ENCODE measurements at regions of chr7 and their contacts with region 1.

Region 1: DNA sequence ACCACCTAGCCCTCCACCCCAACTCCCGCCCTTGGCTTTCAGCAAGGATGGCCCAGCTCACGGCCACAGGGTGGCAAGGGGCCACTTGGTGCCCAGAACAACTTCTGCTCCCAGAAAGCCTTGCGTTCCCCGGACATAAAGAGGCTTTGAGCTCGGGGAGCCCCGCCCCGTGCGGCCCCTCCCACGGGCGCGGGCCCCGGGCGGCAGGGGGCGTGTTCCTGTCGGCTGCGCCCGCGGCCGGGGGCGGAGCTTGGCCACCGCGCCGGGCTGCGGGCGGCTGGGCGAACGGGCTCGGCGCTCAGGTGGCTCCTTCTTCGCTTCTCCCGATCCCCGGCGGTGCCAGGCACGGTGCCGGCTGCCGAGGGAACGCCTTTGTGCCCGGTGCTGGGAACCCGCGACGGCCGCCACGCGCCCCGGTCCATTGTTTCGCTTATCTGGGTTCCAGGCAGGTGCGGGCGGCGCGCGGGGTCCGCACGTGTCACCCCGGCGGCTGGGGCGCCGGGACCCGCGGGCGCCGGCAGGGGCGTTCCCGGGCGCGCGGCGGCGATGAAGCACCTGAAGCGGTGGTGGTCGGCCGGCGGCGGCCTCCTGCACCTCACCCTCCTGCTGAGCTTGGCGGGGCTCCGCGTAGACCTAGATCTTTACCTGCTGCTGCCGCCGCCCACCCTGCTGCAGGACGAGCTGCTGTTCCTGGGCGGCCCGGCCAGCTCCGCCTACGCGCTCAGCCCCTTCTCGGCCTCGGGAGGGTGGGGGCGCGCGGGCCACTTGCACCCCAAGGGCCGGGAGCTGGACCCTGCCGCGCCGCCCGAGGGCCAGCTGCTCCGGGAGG is at the start of gene NFE2L3:
- DNase-seq: peak; percentile 64 to 80
- ATAC-seq: peak; percentile 82 to 89
- H3K4me3 ChIP-seq: peak within 1 kb of the TSS; percentile 91
- H3K27ac ChIP-seq: peak within 1 kb of the TSS; percentile 78 to 94
- H3K4me1 ChIP-seq: peaks cover 28% of the 10 kb centered on the region; the same call in 2 of the 3 replicates
- CTCF ChIP-seq: no peak
- EP300 ChIP-seq: no peak
- POLR2A ChIP-seq: peak; percentile 63
- RAD21 ChIP-seq: no peak
- polyA plus RNA-seq, gene NFE2L3: 9.6 and 11.4 TPM in 2 replicates

Region 2: GRCh38 chr7:26167301-26167934 is 15.3 kb after region 1 on chr7:
- CTCF ChIA-PET with region 1: interaction called, 14 read pairs
- POLR2A ChIA-PET with region 1: interaction called, 3 read pairs
- DNase-seq: no peak
- ATAC-seq: no peak
- H3K4me3 ChIP-seq: no peak overlapping the region
- H3K27ac ChIP-seq: no peak overlapping the region
- H3K4me1 ChIP-seq: no peaks in the 10 kb centered on the region
- CTCF ChIP-seq: no peak
- EP300 ChIP-seq: no peak
- POLR2A ChIP-seq: no peak
- RAD21 ChIP-seq: no peak

Region 3: DNA sequence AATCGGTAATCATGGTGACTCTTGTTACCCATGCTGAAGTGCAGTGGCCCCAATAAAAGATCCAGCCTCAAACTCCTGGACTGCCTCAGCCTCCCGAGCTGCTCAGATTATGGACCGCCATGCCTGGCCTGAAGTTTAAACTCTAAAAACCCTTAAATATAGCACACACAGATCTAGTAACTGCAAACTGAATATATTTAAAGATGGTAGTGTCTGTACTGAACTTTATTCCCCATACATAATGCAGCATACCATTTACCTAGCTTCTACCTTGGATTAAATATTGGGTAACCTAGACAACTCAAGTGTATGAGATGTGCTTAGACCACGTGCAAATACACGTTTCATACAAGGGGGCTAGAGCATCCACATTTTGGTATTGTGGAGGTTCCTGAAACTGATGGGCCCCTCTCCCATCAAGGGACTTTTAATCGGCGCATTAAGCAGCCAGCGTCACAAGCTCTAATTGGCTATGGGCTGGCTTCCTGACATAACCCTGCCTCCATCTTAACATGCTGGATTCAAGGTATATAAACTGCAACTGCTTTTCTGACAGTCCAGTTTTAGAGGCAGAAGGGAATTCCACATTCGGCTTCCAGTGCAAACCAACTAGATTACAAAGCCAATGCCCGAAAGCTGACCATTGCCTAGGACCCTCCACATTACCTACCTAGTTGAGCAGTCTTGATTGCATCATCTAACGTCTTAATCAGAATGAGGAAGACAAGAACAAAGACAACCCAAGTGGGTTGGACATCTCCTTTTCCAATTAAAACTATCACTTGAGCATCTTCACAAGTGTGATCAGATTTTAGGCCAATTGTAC is 35.4 kb after region 1 on chr7:
- CTCF ChIA-PET with region 1: interaction called, 3 read pairs
- POLR2A ChIA-PET with region 1: interaction called, 11 read pairs
- DNase-seq: no peak
- ATAC-seq: peak; percentile 14 to 26; a peak in 4 of 6 replicates
- H3K4me3 ChIP-seq: no peak overlapping the region
- H3K27ac ChIP-seq: peak overlapping the region in 1 of 2 experiments; percentile 57; a peak in 2 of 6 replicates
- H3K4me1 ChIP-seq: peaks cover 95% of the 10 kb centered on the region
- CTCF ChIP-seq: no peak
- EP300 ChIP-seq: no peak
- POLR2A ChIP-seq: no peak
- RAD21 ChIP-seq: no peak